CD4-positive, alpha-beta T cell (primary cell): ENCODE measurements at regions of chr22 and their contacts with region 1.

Region 1: DNA sequence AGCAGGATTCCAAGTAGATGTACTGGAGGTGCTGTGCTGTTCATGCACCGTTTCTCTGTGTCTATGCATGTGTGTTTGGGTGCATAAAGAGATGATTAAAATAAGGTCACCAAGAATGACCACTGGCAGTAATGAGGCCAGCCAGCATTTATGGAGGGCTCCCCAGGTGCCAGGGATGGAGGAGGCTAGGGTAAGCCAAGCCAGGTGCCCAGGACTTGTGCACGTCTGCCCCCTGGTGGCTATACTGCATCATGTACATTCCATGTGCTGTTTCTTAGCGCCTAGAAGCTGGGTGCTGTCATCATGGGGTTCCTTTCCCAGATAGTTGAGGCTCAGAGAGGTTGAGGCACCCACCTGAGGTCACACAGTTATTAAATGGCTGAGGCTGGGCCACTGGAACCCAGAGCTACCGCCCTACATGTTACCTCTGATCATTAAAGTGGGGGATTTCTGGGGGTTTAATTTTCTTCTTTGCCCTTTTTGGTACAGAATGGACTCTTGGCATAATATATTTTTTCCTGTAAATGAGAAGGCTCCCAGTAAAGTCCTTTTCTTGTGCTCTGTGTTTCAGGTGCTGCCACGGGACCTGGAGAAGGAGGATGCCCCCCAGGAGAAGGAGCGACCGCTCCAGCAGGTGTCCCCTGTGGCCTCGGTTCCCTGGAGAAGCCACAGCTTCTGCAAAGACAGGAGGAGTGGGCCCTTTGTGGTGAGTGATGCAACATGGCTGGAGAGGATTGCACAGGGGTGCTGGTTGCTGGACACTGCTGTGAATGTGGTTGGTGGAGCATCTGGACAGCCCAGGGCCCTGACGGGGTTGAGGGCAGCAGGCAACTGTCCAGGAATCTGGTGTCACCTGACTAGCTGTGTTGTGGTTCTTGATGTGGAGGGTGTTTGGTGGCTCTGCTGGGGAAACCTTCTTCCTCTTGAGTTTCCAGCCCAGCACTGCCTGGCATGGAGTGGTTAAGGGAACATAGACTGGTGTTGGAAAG is 96.4 kb downstream of the KIAA1671 start:
- DNase-seq: peak; percentile 55 to 86 (median 65)
- ATAC-seq: peak; percentile 92
- H3K4me3 ChIP-seq: no peak overlapping the region
- H3K4me3 Mint-ChIP-seq: no peak overlapping the region
- H3K27ac ChIP-seq: no peak overlapping the region
- H3K27ac Mint-ChIP-seq: no peak overlapping the region
- H3K4me1 ChIP-seq: no peaks in the 10 kb centered on the region
- H3K4me1 Mint-ChIP-seq: no peaks in the 10 kb centered on the region
- H3K27me3 ChIP-seq: no peaks in the 10 kb centered on the region
- H3K27me3 Mint-ChIP-seq: no peaks in the 10 kb centered on the region
- CTCF ChIP-seq: peak; percentile 78

Region 2: GRCh38 chr22:24768537-24769374 is 280.2 kb before region 1 on chr22:
- CTCF ChIA-PET with region 1: no interaction called
- POLR2A ChIA-PET with region 1: no interaction called
- intact Hi-C with region 1: loop called in 1 of 2 experiments (anchors 2 kb)
- DNase-seq: peak in 13 of 14 experiments; percentile 1 to 62 (median 28)
- ATAC-seq: peak; percentile 48
- H3K4me3 ChIP-seq: no peak overlapping the region
- H3K4me3 Mint-ChIP-seq: no peak overlapping the region
- H3K27ac ChIP-seq: no peak overlapping the region
- H3K27ac Mint-ChIP-seq: no peak overlapping the region
- H3K4me1 ChIP-seq: no peaks in the 10 kb centered on the region
- H3K4me1 Mint-ChIP-seq: no peaks in the 10 kb centered on the region
- H3K27me3 ChIP-seq: peaks cover 0 to 4% of the 10 kb centered on the region in 2 experiments
- H3K27me3 Mint-ChIP-seq: peaks cover 12% of the 10 kb centered on the region
- CTCF ChIP-seq: peak; percentile 46

Region 3: GRCh38 chr22:24938741-24939341 is 110.1 kb before region 1 on chr22:
- CTCF ChIA-PET with region 1: interaction called, 14 read pairs
- POLR2A ChIA-PET with region 1: no interaction called
- intact Hi-C with region 1: loop called (anchors 1 kb)
- DNase-seq: peak in 5 of 14 experiments; percentile 3 to 70 (median 51)
- ATAC-seq: peak; percentile 62
- H3K4me3 ChIP-seq: no peak overlapping the region
- H3K4me3 Mint-ChIP-seq: no peak overlapping the region
- H3K27ac ChIP-seq: no peak overlapping the region
- H3K27ac Mint-ChIP-seq: no peak overlapping the region
- H3K4me1 ChIP-seq: peaks cover 4% of the 10 kb centered on the region
- H3K4me1 Mint-ChIP-seq: no peaks in the 10 kb centered on the region
- H3K27me3 ChIP-seq: peaks cover 5 to 8% of the 10 kb centered on the region in 2 experiments
- H3K27me3 Mint-ChIP-seq: peaks cover 15% of the 10 kb centered on the region
- CTCF ChIP-seq: peak; percentile 79

Region 4: GRCh38 chr22:24951942-24952836 is 96.8 kb before region 1 on chr22 and contains the start of gene KIAA1671:
- CTCF ChIA-PET with region 1: interaction called, 11 read pairs
- POLR2A ChIA-PET with region 1: no interaction called
- intact Hi-C with region 1: loop called (anchors 1 kb)
- DNase-seq: peak; percentile 73 to 92 (median 83)
- ATAC-seq: peak; percentile 94
- H3K4me3 ChIP-seq: peak within 1 kb of the TSS; percentile 70
- H3K4me3 Mint-ChIP-seq: peak within 1 kb of the TSS; percentile 90
- H3K27ac ChIP-seq: no peak within 1 kb of the TSS
- H3K27ac Mint-ChIP-seq: no peak within 1 kb of the TSS
- H3K4me1 ChIP-seq: peaks cover 20% of the 10 kb centered on the region
- H3K4me1 Mint-ChIP-seq: peaks cover 19% of the 10 kb centered on the region
- H3K27me3 ChIP-seq: peaks cover 27 to 37% of the 10 kb centered on the region in 2 experiments
- H3K27me3 Mint-ChIP-seq: peaks cover 75% of the 10 kb centered on the region
- CTCF ChIP-seq: peak; percentile 95
- total RNA-seq, gene KIAA1671: 2.6 to 2.9 TPM